HepG2 (cell line): ENCODE measurements at regions of chr2 and their contacts with region 1.

Region 1: DNA sequence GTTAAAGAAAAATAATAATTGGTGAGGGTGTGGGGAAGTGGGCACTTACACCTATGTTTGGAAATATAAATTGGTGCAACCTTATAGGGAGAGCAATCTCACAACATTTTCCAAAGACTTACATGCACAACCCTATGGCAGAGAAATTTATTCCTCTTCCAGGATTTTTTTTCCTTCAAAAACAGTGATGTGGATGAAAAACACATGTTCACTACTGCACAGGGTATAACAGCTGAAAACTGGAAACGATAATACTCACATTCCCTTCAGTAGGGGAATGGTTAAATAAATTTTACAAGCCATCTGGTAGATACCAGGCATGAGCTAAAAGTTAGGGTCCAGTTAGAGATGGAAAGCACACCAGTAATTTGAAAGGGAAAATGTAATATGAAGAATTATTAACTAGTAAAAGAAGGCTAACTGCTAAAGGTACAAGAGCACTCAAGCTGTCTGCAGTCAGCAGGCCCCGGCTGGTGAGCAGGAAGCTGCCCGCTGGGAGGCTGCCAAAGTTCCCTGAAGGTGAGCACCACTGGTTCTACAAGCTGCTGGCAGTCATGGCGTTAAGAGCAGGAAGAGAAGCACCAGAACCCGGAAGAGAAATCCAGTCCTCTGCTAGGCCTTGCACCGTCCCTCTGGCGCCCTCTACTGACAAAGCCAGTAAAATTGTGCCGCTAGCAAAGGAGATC is 28.4 kb upstream of the CASP8 start:
- DNase-seq: peak; percentile 98
- ATAC-seq: peak; percentile 67
- H3K4me3 ChIP-seq: peak overlapping the region; percentile 35 to 98 (median 89); a peak in 5 of 6 replicates
- H3K27ac ChIP-seq: peak overlapping the region; percentile 78
- H3K4me1 ChIP-seq: peaks cover 36% of the 10 kb centered on the region
- H3K27me3 ChIP-seq: no peaks in the 10 kb centered on the region; a peak in 1 of 5 replicates
- CTCF ChIP-seq: peak; percentile 99
- EP300 ChIP-seq: peak in 1 of 2 experiments; percentile 62; a peak in 3 of 4 replicates
- POLR2A ChIP-seq: peak; percentile 74 to 75
- RAD21 ChIP-seq: peak; percentile 98

Region 2: DNA sequence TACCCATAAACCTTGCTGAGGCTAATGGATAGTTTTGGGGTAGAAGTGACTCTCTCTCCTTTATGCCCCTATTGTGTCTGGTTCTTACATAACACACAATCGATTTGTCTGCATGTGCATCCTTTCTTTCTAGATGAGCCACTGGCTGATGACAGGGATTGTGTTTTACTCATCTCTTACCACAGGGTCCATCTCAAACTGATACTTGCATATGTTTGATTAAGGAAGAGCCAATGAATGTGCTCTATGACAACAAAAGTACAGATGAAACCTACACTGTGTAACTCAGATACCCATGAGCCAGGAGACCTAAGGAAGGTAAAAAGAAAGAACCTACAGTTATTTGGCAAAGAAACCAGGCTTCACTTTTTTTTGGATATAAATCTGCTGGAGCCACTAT is 433.4 kb before region 1 on chr2:
- CTCF ChIA-PET with region 1: no interaction called
- POLR2A ChIA-PET with region 1: no interaction called
- in situ Hi-C with region 1: no loop called
- intact Hi-C with region 1: no loop called
- DNase-seq: no peak
- ATAC-seq: no peak
- H3K4me3 ChIP-seq: no peak overlapping the region
- H3K27ac ChIP-seq: no peak overlapping the region
- H3K4me1 ChIP-seq: peaks cover 29% of the 10 kb centered on the region
- H3K27me3 ChIP-seq: no peaks in the 10 kb centered on the region; a peak in 1 of 5 replicates
- CTCF ChIP-seq: no peak
- EP300 ChIP-seq: no peak
- POLR2A ChIP-seq: no peak
- RAD21 ChIP-seq: no peak

Region 3: GRCh38 chr2:200888704-200889625 is 343.0 kb before region 1 on chr2 and contains the starts of genes NIF3L1 and PPIL3:
- CTCF ChIA-PET with region 1: no interaction called
- POLR2A ChIA-PET with region 1: interaction called, 10 read pairs
- in situ Hi-C with region 1: no loop called
- intact Hi-C with region 1: no loop called
- DNase-seq: peak; percentile 99
- ATAC-seq: peak; percentile 90
- H3K4me3 ChIP-seq: peak within 1 kb of the TSS; percentile 79 to 92 (median 90)
- H3K27ac ChIP-seq: peak within 1 kb of the TSS; percentile 97
- H3K4me1 ChIP-seq: peaks cover 34% of the 10 kb centered on the region
- H3K27me3 ChIP-seq: no peaks in the 10 kb centered on the region; a peak in 2 of 5 replicates
- CTCF ChIP-seq: no peak; the same call in none of the 2 replicates
- EP300 ChIP-seq: peak; percentile 30 to 68; a peak in 2 of 4 replicates
- POLR2A ChIP-seq: peak; percentile 69 to 95
- RAD21 ChIP-seq: 0 out of 2 replicates have a peak, but pooled peaks have one; percentile 17
- total RNA-seq, gene NIF3L1: 67.9 and 98.5 TPM in 2 replicates
- total RNA-seq, gene PPIL3: 98.7 and 126 TPM in 2 replicates

Region 4: DNA sequence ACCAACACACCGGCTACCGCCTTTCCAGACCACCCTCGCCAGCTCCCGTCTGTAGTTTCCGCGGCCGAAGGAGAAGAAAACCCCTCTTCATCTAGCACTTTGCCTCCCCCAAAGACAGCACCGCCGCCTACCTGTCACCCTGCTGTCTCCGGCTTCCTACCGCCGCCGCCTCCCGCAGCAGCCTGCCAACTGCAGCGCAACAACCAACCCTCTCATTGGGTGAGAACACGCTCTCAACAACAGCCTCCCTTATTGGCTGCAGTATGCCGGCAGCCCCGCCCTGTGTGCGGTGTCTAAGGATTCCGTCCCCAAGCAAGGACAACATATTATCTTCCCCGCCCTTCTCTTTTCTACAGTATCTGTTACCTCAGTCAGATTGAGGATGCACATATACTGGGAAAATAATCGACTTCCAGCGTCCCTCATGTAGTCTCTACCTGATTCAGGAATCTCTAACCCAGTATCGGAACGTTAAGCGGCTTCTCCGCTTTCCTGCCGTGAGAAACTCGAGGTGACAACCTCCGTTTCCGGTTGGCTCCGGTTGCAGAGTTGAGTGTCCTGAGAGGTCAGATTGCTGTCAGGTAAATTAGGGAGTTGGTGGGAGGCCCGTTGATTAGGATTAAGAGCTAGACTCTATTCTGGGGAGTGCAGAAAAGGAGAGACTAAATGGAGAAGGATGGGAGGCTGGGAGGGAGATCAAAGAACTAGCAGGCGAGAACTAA is 160.3 kb before region 1 on chr2 and contains the starts of genes HYCC2 and NDUFB3:
- CTCF ChIA-PET with region 1: no interaction called
- POLR2A ChIA-PET with region 1: no interaction called
- in situ Hi-C with region 1: no loop called
- intact Hi-C with region 1: loop called (anchors 2 kb)
- DNase-seq: peak; percentile 95
- ATAC-seq: peak; percentile 98
- H3K4me3 ChIP-seq: peak within 1 kb of the TSS; percentile 77 to 91 (median 91)
- H3K27ac ChIP-seq: peak within 1 kb of the TSS; percentile 88
- H3K4me1 ChIP-seq: peaks cover 34% of the 10 kb centered on the region
- H3K27me3 ChIP-seq: no peaks in the 10 kb centered on the region; a peak in 1 of 5 replicates
- CTCF ChIP-seq: peak; percentile 82
- EP300 ChIP-seq: no peak; a peak in 3 of 4 replicates
- POLR2A ChIP-seq: peak; percentile 65 to 71
- RAD21 ChIP-seq: peak; percentile 51
- total RNA-seq, gene HYCC2: 13.9 and 21.5 TPM in 2 replicates
- total RNA-seq, gene NDUFB3: 159 and 209 TPM in 2 replicates

Region 5: GRCh38 chr2:201194097-201194496 is 37.8 kb before region 1 on chr2:
- CTCF ChIA-PET with region 1: no interaction called
- POLR2A ChIA-PET with region 1: interaction called, 13 read pairs
- in situ Hi-C with region 1: no loop called
- intact Hi-C with region 1: no loop called
- DNase-seq: no peak
- ATAC-seq: no peak
- H3K4me3 ChIP-seq: no peak overlapping the region
- H3K27ac ChIP-seq: no peak overlapping the region
- H3K4me1 ChIP-seq: peaks cover 41% of the 10 kb centered on the region
- H3K27me3 ChIP-seq: no peaks in the 10 kb centered on the region
- CTCF ChIP-seq: no peak
- EP300 ChIP-seq: no peak
- POLR2A ChIP-seq: no peak
- RAD21 ChIP-seq: no peak

Region 6: GRCh38 chr2:201254081-201254730 is 22.3 kb after region 1 on chr2:
- CTCF ChIA-PET with region 1: no interaction called
- POLR2A ChIA-PET with region 1: interaction called, 19 read pairs
- in situ Hi-C with region 1: no loop called
- intact Hi-C with region 1: no loop called
- DNase-seq: peak; percentile 63
- ATAC-seq: peak; percentile 49
- H3K4me3 ChIP-seq: no peak overlapping the region
- H3K27ac ChIP-seq: no peak overlapping the region
- H3K4me1 ChIP-seq: peaks cover 34% of the 10 kb centered on the region
- H3K27me3 ChIP-seq: no peaks in the 10 kb centered on the region
- CTCF ChIP-seq: no peak
- EP300 ChIP-seq: no peak
- POLR2A ChIP-seq: no peak
- RAD21 ChIP-seq: no peak

Region 7: GRCh38 chr2:201642579-201643215 is 410.8 kb after region 1 on chr2:
- CTCF ChIA-PET with region 1: no interaction called
- POLR2A ChIA-PET with region 1: no interaction called
- in situ Hi-C with region 1: no loop called
- intact Hi-C with region 1: loop called (anchors 2 kb)
- DNase-seq: peak; percentile 68
- ATAC-seq: peak; percentile 96
- H3K4me3 ChIP-seq: peak overlapping the region; percentile 82 to 98 (median 85)
- H3K27ac ChIP-seq: peak overlapping the region; percentile 68
- H3K4me1 ChIP-seq: peaks cover 18% of the 10 kb centered on the region
- H3K27me3 ChIP-seq: peaks cover 0 to 1% of the 10 kb centered on the region in 2 experiments; a peak in 1 of 5 replicates
- CTCF ChIP-seq: peak; percentile 19; the same call in 1 of the 2 replicates
- EP300 ChIP-seq: 0 out of 4 replicates have a peak, but pooled peaks of 1 of the 2 experiments have one; percentile 8
- POLR2A ChIP-seq: peak; percentile 88 to 90
- RAD21 ChIP-seq: peak; percentile 39